Activated CD4-positive, alpha-beta memory T cell treated with anti-CD3 and anti-CD28 coated beads, Interleukin-2, amount 10 ng/mL, durations not matched to agents 7 days and 5 days (primary cell): ENCODE measurements at regions of chr7 and their contacts with region 1.

Region 1: GRCh38 chr7:50266635-50267386 is 37.7 kb upstream of the IKZF1 start:
- DNase-seq: peak; percentile 88
- H3K4me3 Mint-ChIP-seq: peak overlapping the region; percentile 62
- H3K27ac Mint-ChIP-seq: peak overlapping the region; percentile 98
- H3K4me1 Mint-ChIP-seq: peaks cover 92% of the 10 kb centered on the region
- H3K27me3 Mint-ChIP-seq: no peaks in the 10 kb centered on the region

Region 2: GRCh38 chr7:50212666-50213621 is 53.9 kb before region 1 on chr7:
- CTCF ChIA-PET with region 1: interaction called, 40 read pairs
- POLR2A ChIA-PET with region 1: interaction called, 90 read pairs
- DNase-seq: peak; percentile 57
- H3K4me3 Mint-ChIP-seq: peak overlapping the region; percentile 15
- H3K27ac Mint-ChIP-seq: peak overlapping the region; percentile 83
- H3K4me1 Mint-ChIP-seq: peaks cover 91% of the 10 kb centered on the region
- H3K27me3 Mint-ChIP-seq: no peaks in the 10 kb centered on the region

Region 3: GRCh38 chr7:50229964-50230363 is 36.8 kb before region 1 on chr7:
- CTCF ChIA-PET with region 1: interaction called, 19 read pairs
- POLR2A ChIA-PET with region 1: interaction called, 42 read pairs
- DNase-seq: no peak
- H3K4me3 Mint-ChIP-seq: no peak overlapping the region
- H3K27ac Mint-ChIP-seq: no peak overlapping the region
- H3K4me1 Mint-ChIP-seq: peaks cover 42% of the 10 kb centered on the region
- H3K27me3 Mint-ChIP-seq: no peaks in the 10 kb centered on the region

Region 4: GRCh38 chr7:50251765-50252164 is 15.0 kb before region 1 on chr7:
- CTCF ChIA-PET with region 1: no interaction called
- POLR2A ChIA-PET with region 1: interaction called, 17 read pairs
- DNase-seq: no peak
- H3K4me3 Mint-ChIP-seq: no peak overlapping the region
- H3K27ac Mint-ChIP-seq: no peak overlapping the region
- H3K4me1 Mint-ChIP-seq: peaks cover 1% of the 10 kb centered on the region
- H3K27me3 Mint-ChIP-seq: no peaks in the 10 kb centered on the region

Region 5: GRCh38 chr7:50304158-50304910 is 37.5 kb after region 1 on chr7 and contains the start of gene IKZF1:
- CTCF ChIA-PET with region 1: interaction called, 11 read pairs
- POLR2A ChIA-PET with region 1: interaction called, 454 read pairs
- DNase-seq: peak; percentile 58
- H3K4me3 Mint-ChIP-seq: peak within 1 kb of the TSS; percentile 88
- H3K27ac Mint-ChIP-seq: peak within 1 kb of the TSS; percentile 99
- H3K4me1 Mint-ChIP-seq: peaks cover 29% of the 10 kb centered on the region
- H3K27me3 Mint-ChIP-seq: peaks cover 8% of the 10 kb centered on the region
- total RNA-seq, gene IKZF1: 383 to 404 TPM

Region 6: DNA sequence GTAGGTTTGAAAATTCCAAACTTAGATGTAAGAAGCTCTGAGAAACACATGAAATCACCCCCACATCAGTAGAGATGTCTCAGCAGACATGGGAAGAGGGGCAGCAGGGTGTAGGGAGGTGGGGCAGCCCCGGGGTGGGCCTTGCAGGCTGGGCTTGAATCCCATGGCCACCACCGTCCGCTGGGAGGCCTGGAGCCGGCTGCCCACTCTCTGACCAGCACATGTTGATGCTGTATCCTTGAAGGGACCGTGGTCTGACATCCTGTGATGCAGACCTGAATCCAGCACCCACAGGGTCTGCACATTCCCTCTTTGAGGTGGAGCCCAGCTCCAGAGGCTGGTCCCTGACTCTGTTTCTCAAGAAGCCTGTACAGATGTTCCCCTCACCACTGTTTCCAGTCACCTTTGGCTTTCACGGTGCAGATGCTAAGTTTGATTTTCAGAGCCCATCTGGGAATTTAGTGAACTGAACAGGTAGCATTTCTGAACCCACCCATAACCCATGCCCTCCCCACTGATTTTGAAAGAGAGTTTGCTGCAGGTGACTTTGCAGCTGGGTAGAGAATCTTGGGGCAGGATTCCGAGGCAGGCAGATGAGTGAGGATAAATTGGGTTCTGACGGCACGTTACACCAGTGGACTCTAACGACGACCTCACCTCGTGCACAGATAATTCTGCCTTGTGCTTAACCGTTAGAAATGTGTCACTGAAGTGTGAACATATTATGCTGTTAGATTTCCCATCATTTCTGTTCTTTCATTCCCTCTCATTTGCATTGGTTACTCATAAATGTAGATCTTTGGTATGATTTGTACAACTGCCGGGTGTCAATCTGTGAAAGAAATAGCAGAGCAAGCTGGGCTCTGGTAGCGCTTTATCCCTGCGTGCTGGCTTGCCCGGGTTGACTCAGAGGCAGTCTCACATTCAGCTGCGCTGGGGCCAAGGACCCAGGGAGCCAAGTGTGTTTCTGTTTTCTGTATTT is 83.4 kb after region 1 on chr7:
- CTCF ChIA-PET with region 1: interaction called, 4 read pairs
- POLR2A ChIA-PET with region 1: interaction called, 13 read pairs
- DNase-seq: peak; percentile 87
- H3K4me3 Mint-ChIP-seq: peak overlapping the region; percentile 62
- H3K27ac Mint-ChIP-seq: peak overlapping the region; percentile 92
- H3K4me1 Mint-ChIP-seq: peaks cover 97% of the 10 kb centered on the region
- H3K27me3 Mint-ChIP-seq: no peaks in the 10 kb centered on the region

Region 7: GRCh38 chr7:50359995-50360925 is 93.4 kb after region 1 on chr7:
- CTCF ChIA-PET with region 1: interaction called, 3 read pairs
- POLR2A ChIA-PET with region 1: interaction called, 10 read pairs
- DNase-seq: peak; percentile 82
- H3K4me3 Mint-ChIP-seq: peak overlapping the region; percentile 53
- H3K27ac Mint-ChIP-seq: peak overlapping the region; percentile 96
- H3K4me1 Mint-ChIP-seq: peaks cover 98% of the 10 kb centered on the region
- H3K27me3 Mint-ChIP-seq: no peaks in the 10 kb centered on the region

Region 8: DNA sequence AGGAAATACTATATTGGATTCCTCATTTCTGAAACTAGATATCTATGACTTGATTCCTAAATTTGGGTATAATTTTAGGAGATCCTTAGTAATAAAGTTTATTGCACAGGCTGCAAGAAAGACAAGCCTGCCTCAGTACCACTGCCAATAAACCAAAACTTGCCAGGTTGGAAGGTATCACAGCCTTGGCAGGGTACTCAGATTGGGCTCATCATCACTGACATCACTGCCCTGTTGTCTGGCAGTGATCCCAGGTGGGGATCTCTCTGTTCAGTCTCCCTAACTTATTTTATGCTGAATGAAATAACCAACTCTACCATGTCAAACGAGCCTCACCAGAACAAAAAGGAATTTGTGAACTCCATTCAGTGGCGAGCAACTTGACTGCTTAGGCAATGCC is 164.5 kb after region 1 on chr7:
- CTCF ChIA-PET with region 1: no interaction called
- POLR2A ChIA-PET with region 1: no interaction called
- DNase-seq: no peak
- H3K4me3 Mint-ChIP-seq: no peak overlapping the region
- H3K27ac Mint-ChIP-seq: no peak overlapping the region
- H3K4me1 Mint-ChIP-seq: no peaks in the 10 kb centered on the region
- H3K27me3 Mint-ChIP-seq: no peaks in the 10 kb centered on the region